Natural killer cell (primary cell): ENCODE measurements at regions of chr3 and their contacts with region 1.

Region 1: DNA sequence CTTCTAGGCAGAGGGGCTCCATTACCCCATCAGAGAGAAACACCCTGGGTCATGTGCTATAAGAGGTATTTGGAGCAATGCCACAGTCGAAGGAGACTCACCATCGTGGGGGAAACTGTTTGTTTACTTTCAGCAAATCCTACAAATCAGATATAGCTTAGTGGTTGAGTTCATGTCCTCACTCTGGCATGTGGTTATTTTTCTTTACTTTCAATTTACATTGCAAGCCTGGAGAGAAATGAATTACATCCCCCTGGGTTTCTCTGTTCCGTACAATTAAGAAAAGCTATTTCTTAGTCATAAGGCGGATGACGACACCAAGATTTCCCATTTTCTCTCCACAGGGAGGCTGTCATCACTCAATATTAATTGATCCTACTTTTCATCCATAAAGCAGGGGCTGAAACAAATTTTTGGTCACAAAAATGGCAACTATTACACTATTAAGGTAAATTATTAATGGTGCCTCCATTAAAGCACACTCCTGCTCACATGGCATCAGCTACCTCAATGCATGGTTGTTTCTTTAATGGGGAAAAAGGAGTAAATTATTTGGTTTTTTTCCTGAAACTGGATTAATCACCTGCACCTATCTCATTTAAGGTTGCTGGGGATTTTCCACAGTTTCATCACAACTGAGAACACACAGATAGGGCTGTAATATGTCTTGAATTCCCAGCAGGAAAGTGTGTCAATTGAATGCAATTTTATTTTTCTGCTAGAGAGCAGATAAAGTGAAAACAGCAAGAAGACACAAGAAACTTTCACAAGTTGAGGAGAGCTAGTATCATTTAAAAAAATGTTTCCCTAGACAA is 36.7 kb downstream of the RFTN1 start:
- DNase-seq: peak in 1 of 2 donors; percentile 43
- ATAC-seq: peak; percentile 64 to 79 (median 65)
- H3K4me3 ChIP-seq: no peak overlapping the region
- H3K4me3 Mint-ChIP-seq: peak overlapping the region; percentile 43
- H3K27ac ChIP-seq: peak overlapping the region; percentile 56
- H3K27ac Mint-ChIP-seq: peak overlapping the region; percentile 53 to 56
- H3K4me1 ChIP-seq: peaks cover 28% of the 10 kb centered on the region
- H3K4me1 Mint-ChIP-seq: peaks cover 68 to 81% of the 10 kb centered on the region in 2 donors
- H3K27me3 ChIP-seq: no peaks in the 10 kb centered on the region
- H3K27me3 Mint-ChIP-seq: no peaks in the 10 kb centered on the region
- CTCF ChIP-seq: no peak

Region 2: DNA sequence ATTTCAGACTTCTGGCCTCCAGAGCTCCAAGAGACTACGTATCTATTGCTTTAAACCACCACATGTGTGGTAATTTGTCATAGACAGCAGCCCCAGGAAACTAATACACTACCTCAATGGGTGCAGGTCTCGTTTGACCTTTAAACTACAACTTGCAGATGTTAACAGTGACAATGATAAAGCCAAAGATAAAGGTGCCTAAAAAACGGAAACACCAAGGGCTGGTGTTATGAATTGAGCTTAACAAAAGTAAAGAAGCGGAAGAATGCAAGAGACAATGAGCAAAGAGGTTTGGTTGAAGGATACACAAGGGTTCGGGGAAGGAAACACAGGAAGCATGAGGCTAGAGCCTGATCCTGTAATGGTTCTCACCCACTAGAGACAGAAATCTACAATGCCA is 14.2 kb before region 1 on chr3:
- intact Hi-C with region 1: loop called (anchors 2 kb)
- DNase-seq: peak in 1 of 2 donors; percentile 49
- ATAC-seq: peak; percentile 63 to 78 (median 77)
- H3K4me3 ChIP-seq: no peak overlapping the region
- H3K4me3 Mint-ChIP-seq: peak overlapping the region; percentile 56
- H3K27ac ChIP-seq: peak overlapping the region; percentile 59
- H3K27ac Mint-ChIP-seq: peak overlapping the region; percentile 81 to 85
- H3K4me1 ChIP-seq: peaks cover 23% of the 10 kb centered on the region
- H3K4me1 Mint-ChIP-seq: peaks cover 44 to 50% of the 10 kb centered on the region in 2 donors
- H3K27me3 ChIP-seq: no peaks in the 10 kb centered on the region
- H3K27me3 Mint-ChIP-seq: no peaks in the 10 kb centered on the region
- CTCF ChIP-seq: no peak

Region 3: GRCh38 chr3:16511681-16512434 is 35.0 kb after region 1 on chr3:
- intact Hi-C with region 1: loop called (anchors 5 kb)
- DNase-seq: peak; percentile 66 to 94
- ATAC-seq: peak; percentile 50 to 76 (median 74)
- H3K4me3 ChIP-seq: peak overlapping the region; percentile 70
- H3K4me3 Mint-ChIP-seq: peak overlapping the region; percentile 97
- H3K27ac ChIP-seq: peak overlapping the region; percentile 92
- H3K27ac Mint-ChIP-seq: peak overlapping the region; percentile 91 to 97
- H3K4me1 ChIP-seq: peaks cover 74% of the 10 kb centered on the region
- H3K4me1 Mint-ChIP-seq: peaks cover 80 to 88% of the 10 kb centered on the region in 2 donors
- H3K27me3 ChIP-seq: no peaks in the 10 kb centered on the region
- H3K27me3 Mint-ChIP-seq: no peaks in the 10 kb centered on the region
- CTCF ChIP-seq: no peak